Panc1 (cell line): ENCODE measurements at regions of chr1 and their contacts with region 1.

Region 1: GRCh38 chr1:10787286-10787685 is 9.2 kb downstream of the CASZ1 start:
- DNase-seq: no peak
- ATAC-seq: no peak
- H3K4me3 ChIP-seq: no peak overlapping the region
- H3K27ac ChIP-seq: no peak overlapping the region
- H3K4me1 ChIP-seq: peaks cover 52% of the 10 kb centered on the region
- H3K27me3 ChIP-seq: no peaks in the 10 kb centered on the region
- CTCF ChIP-seq: no peak

Region 2: DNA sequence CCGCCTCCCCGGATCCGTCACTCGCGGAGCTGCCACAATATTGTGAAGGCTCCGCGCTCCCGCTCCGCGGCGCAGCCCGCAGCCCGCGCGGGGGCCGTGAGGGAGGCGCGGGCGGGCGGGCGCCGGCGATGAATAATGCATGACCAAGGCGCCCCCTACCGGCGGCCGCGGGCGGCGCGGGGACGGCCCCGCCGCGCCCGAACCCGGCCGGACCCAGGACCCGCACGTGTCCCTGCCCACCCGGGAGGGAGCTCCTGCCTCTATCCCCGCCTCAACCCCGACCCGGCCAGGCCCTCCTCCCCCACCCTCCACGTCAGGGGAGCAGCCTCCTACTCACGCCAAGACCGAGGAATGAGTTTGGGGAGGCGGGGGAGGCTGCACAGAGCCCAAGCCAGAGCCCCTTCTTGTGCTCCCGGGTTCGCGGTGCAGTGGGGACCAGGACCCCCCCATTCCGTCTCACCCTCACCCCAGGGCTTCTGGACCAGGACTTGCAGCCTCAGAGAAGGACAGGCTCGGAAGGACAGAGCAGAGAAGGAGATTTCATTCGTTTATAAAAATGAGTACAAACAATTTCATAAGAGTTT is 79.9 kb after region 1 on chr1:
- CTCF ChIA-PET with region 1: interaction called, 10 read pairs
- POLR2A ChIA-PET with region 1: no interaction called
- in situ Hi-C with region 1: no loop called
- intact Hi-C with region 1: no loop called
- DNase-seq: no peak
- ATAC-seq: peak; percentile 92
- H3K4me3 ChIP-seq: peak overlapping the region; percentile 30 to 46
- H3K27ac ChIP-seq: peak overlapping the region; percentile 65
- H3K4me1 ChIP-seq: peaks cover 16% of the 10 kb centered on the region
- H3K27me3 ChIP-seq: no peaks in the 10 kb centered on the region
- CTCF ChIP-seq: peak; percentile 95